ENCODE measurements at regions of chr2 and their contacts with region 1.

Region 1: GRCh38 chr2:181715033-181715630 is 34.8 kb upstream of the NEUROD1 start:
- DNase-seq: peak; percentile 77
- H3K4me3 Mint-ChIP-seq: no peak overlapping the region
- H3K27ac Mint-ChIP-seq: no peak overlapping the region
- H3K4me1 Mint-ChIP-seq: no peaks in the 10 kb centered on the region
- H3K27me3 Mint-ChIP-seq: no peaks in the 10 kb centered on the region
- CTCF ChIP-seq: peak; percentile 42

Region 2: DNA sequence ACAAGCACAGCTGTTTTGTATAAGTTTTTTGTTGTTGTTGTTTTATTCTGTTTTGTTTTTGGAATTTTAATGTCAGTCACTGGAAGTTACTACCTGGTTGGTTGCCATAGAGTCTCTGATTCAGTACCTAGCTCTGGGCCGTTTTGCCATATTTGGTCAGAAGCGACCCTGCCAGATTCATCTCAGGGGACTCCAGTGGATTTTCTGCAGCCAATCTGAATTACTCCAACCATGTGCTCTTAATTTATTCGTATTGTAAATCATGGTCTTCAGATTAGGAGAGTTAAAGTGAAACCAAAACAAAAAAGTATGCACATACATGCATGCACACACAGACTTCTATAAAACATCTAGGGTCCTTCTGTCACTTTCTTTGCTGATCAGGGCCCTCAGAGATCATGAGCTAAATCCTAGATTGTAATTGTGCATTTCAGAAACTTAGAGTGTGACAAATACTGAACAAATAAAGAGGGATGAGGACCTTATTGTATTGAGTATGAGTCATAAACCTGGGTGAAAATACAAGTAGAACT is 1052.1 kb before region 1 on chr2:
- CTCF ChIA-PET with region 1: no interaction called
- intact Hi-C with region 1: no loop called
- DNase-seq: no peak
- H3K4me3 Mint-ChIP-seq: no peak overlapping the region
- H3K27ac Mint-ChIP-seq: no peak overlapping the region
- H3K4me1 Mint-ChIP-seq: peaks cover 20% of the 10 kb centered on the region
- H3K27me3 Mint-ChIP-seq: no peaks in the 10 kb centered on the region
- CTCF ChIP-seq: no peak

Region 3: GRCh38 chr2:181077128-181077709 is 637.9 kb before region 1 on chr2:
- CTCF ChIA-PET with region 1: no interaction called
- intact Hi-C with region 1: loop called (anchors 2 kb)
- DNase-seq: peak; percentile 6
- H3K4me3 Mint-ChIP-seq: no peak overlapping the region
- H3K27ac Mint-ChIP-seq: no peak overlapping the region
- H3K4me1 Mint-ChIP-seq: no peaks in the 10 kb centered on the region
- H3K27me3 Mint-ChIP-seq: no peaks in the 10 kb centered on the region
- CTCF ChIP-seq: peak; percentile 65

Region 4: DNA sequence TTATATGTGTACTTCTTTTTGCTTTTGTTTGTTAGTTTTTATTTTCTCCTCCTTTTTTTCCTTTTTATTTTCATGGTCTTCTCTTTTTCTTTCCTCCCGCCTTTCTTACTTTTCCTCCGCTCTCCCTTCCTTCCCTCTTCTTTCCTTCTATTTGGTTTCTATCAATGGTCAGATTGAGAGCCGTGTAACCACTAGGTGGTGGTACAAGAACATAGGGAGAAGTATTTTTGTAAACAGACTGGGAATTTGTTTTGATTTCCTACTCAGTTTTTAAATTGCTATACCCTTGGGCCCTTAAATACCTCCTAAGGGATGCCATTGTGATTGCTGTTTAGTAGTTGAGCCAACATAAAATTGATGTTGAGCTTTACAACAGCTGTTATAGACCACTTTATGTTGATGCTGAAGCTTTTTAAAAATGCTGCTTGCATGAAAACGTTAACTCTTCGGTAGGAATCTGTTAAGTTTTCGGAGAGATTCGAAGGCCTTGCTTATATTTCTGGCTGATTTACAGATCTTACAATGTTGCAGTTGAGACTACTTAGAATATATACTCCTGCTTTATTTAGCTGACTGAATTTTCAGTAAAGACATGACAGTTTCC is 610.5 kb before region 1 on chr2:
- CTCF ChIA-PET with region 1: interaction called, 8 read pairs
- intact Hi-C with region 1: loop called (anchors 1 kb)
- DNase-seq: peak; percentile 39
- H3K4me3 Mint-ChIP-seq: no peak overlapping the region
- H3K27ac Mint-ChIP-seq: no peak overlapping the region
- H3K4me1 Mint-ChIP-seq: peaks cover 9% of the 10 kb centered on the region
- H3K27me3 Mint-ChIP-seq: no peaks in the 10 kb centered on the region
- CTCF ChIP-seq: peak; percentile 68

Region 5: DNA sequence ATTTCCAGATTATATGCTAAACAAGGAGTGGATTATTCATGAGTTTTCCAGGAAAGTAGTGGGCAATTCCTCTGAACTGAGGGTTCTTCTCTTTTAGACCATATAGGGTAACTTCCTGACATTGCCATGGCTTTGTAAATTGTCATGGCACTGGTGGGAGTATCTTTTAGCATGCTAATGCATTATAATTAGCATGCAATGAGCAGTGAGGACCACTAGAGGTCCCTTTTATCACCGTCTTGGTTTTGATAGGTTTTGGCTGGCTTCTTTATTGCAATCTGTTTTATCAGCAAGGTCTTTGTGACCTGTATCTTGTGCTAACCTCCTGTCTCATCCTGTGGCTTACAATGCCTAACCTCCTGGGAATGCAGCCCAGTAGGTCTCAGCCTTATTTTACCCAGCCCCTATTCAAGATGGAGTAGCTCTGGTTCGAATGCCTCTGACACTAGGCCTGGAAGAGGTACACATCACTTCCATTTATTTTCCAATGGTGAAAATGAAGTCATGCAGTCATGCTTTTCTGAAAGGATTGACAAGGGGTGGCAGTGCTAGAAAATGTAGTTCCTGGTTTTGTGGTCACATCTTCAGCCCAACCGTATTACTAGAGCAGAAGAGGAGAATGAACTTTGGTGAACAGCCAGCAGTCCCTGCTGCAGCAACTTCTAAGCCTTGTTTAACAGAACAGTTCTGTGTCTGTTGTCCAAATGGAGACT is 284.6 kb before region 1 on chr2:
- CTCF ChIA-PET with region 1: no interaction called
- intact Hi-C with region 1: loop called (anchors 2 kb)
- DNase-seq: peak; percentile 7
- H3K4me3 Mint-ChIP-seq: no peak overlapping the region
- H3K27ac Mint-ChIP-seq: no peak overlapping the region
- H3K4me1 Mint-ChIP-seq: no peaks in the 10 kb centered on the region
- H3K27me3 Mint-ChIP-seq: no peaks in the 10 kb centered on the region
- CTCF ChIP-seq: no peak

Region 6: GRCh38 chr2:181573140-181573736 is 141.9 kb before region 1 on chr2:
- CTCF ChIA-PET with region 1: interaction called, 91 read pairs
- intact Hi-C with region 1: loop called (anchors 1 kb)
- DNase-seq: peak; percentile 52
- H3K4me3 Mint-ChIP-seq: no peak overlapping the region
- H3K27ac Mint-ChIP-seq: no peak overlapping the region
- H3K4me1 Mint-ChIP-seq: no peaks in the 10 kb centered on the region
- H3K27me3 Mint-ChIP-seq: no peaks in the 10 kb centered on the region
- CTCF ChIP-seq: peak; percentile 52

Region 7: DNA sequence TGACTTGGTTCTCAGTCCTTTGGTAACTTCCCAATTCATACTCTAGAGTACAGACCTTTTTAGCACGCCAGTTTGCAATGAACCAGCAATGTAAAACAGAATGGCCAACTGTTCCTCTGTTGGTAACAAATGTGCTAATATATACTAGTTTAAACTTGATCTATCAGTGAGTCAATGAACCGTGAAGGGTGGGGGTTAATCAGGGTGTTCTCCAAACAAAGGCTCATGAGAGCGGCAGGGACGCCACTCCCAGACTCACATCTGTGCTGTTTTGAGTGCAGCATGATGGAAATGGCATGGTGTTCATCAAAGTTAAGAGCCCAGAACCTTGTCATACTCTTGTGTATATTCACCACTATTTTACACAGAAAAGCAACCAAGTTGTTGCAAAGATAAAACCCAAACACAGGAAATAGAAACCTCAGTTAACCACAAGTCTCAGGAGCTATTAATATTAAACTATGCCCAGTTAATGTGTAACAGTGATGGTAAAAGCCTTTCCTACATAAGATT is 128.5 kb before region 1 on chr2:
- CTCF ChIA-PET with region 1: interaction called, 11 read pairs
- intact Hi-C with region 1: no loop called
- DNase-seq: peak; percentile 71
- H3K4me3 Mint-ChIP-seq: peak overlapping the region; percentile 65
- H3K27ac Mint-ChIP-seq: peak overlapping the region; percentile 85
- H3K4me1 Mint-ChIP-seq: peaks cover 72% of the 10 kb centered on the region
- H3K27me3 Mint-ChIP-seq: no peaks in the 10 kb centered on the region
- CTCF ChIP-seq: no peak

Region 8: GRCh38 chr2:181656450-181657291 is 58.5 kb before region 1 on chr2 and contains the start of gene CERKL:
- CTCF ChIA-PET with region 1: interaction called, 14 read pairs
- intact Hi-C with region 1: no loop called
- DNase-seq: peak; percentile 83
- H3K4me3 Mint-ChIP-seq: peak within 1 kb of the TSS; percentile 88
- H3K27ac Mint-ChIP-seq: peak within 1 kb of the TSS; percentile 73
- H3K4me1 Mint-ChIP-seq: peaks cover 10% of the 10 kb centered on the region
- H3K27me3 Mint-ChIP-seq: no peaks in the 10 kb centered on the region
- CTCF ChIP-seq: no peak
- total RNA-seq, gene CERKL: 1.1 and 1.5 TPM in 2 replicates